ENCODE measurements at regions of chr16 and their contacts with region 1.

Region 1: DNA sequence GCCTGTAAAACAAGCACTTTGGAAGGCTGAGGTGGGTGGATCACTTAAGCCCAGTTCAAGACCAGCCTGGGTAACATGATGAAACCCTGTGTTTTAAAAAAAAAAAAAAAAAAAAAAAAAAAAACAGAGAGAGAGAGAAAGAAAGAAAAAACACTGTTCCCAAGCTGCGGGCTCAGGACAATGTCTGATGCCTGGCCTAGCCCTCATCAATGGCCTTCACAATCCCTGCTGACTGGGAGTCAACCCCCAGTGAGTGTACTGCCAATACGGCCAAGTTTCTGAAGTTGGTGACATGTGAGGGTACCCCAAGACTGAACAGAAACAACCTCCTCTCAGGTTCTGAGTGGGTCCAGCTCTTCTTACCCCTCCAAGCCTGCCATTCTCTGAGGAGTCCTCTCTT is 116.5 kb downstream of the ZNF778 start:
- DNase-seq: no peak
- H3K4me3 ChIP-seq: no peak overlapping the region
- H3K27me3 ChIP-seq: no peaks in the 10 kb centered on the region
- CTCF ChIP-seq: no peak

Region 2: DNA sequence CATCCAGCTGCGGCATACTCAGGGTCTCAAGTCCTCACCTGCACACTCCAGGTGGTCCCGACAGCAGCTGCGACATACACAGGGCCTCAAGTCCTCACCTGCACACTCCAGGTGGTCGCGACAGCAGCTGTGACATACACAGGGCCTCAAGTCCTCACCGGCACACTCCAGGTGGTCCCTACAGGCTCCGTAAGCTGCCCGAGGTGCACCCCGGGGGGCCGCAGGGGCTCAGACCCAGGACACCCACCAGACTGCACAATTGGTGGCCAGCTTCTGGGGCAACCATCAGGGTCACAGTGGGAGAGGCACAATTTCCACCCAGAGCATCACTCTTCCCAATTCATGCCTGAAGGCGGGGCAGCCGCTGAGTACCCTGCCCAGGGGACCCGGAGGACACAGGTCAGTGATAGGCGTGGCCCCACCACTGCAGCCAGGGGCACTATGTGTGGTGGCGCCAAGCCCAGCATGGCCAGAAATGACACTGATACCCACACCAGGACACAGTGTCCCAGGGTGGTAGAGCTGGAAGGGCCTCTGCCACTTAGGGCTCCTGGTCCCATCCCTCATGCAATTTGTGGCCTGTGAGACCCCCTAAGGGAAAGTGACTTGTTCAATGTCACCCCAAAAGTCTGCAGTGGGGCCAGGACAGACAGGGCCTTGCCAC is 1008.8 kb before region 1 on chr16:
- CTCF ChIA-PET with region 1: no interaction called
- POLR2A ChIA-PET with region 1: interaction called, 14 read pairs
- DNase-seq: no peak
- H3K4me3 ChIP-seq: no peak overlapping the region
- H3K27me3 ChIP-seq: no peaks in the 10 kb centered on the region
- CTCF ChIP-seq: no peak